Activated CD8-positive, alpha-beta memory T cell treated with anti-CD3 and anti-CD28 coated beads, Interleukin-2, amount 10 ng/mL, durations not matched to agents 7 days and 5 days (primary cell): ENCODE measurements at regions of chr15 and their contacts with region 1.

Region 1: GRCh38 chr15:59725172-59725486 is 36.0 kb upstream of the BNIP2 start:
- DNase-seq: no peak
- ATAC-seq: no peak
- H3K4me3 Mint-ChIP-seq: no peak overlapping the region
- H3K27ac Mint-ChIP-seq: no peak overlapping the region
- H3K4me1 Mint-ChIP-seq: peaks cover 2% of the 10 kb centered on the region
- H3K27me3 Mint-ChIP-seq: peaks cover 23% of the 10 kb centered on the region

Region 2: DNA sequence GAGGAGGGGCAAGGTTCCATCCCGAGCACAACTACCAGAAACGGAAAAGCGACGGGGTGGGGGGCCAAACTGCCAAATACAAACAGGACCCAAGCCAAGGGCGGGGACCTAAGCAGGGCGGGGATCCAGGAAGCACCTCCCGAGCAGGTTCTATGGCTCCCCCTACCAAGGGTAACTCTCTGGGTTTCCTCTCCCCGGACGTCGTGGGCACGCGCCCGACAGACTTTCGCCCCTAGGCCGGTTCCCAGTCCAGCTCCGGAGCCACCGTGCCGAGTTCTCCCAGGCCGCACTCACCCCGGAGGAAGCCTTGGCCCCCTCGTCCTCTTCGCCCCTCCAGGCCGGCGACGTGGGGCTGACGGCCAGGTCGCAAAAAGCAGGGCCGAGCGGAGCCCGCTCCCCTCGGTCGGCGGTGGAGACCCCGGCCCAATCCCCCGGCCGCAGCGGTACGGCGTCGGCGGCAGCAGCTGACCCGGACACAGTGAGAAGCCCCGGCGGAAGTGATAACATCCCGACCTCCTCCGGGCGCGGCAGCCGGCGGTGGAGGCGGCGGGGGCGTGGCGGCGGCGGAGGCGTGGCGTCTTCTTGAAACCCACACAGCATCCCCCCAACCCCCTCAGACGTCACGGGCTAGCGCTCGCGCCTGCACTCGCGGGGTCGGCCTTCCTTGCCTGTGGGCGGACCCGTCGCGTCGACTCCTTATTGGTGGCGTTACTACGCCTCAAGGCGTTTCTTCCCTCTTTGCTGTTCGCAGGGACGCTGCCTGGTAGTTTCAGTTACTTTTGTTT is 36.1 kb before region 1 on chr15 and contains the start of gene BNIP2:
- CTCF ChIA-PET with region 1: interaction called, 14 read pairs
- DNase-seq: peak; percentile 100
- ATAC-seq: peak; percentile 93
- H3K4me3 Mint-ChIP-seq: peak within 1 kb of the TSS; percentile 84
- H3K27ac Mint-ChIP-seq: peak within 1 kb of the TSS; percentile 97
- H3K4me1 Mint-ChIP-seq: peaks cover 42% of the 10 kb centered on the region
- H3K27me3 Mint-ChIP-seq: no peaks in the 10 kb centered on the region
- total RNA-seq, gene BNIP2: 59.3 to 75.2 TPM

Region 3: GRCh38 chr15:59879506-59880265 is 154.6 kb after region 1 on chr15:
- CTCF ChIA-PET with region 1: no interaction called
- DNase-seq: no peak
- ATAC-seq: no peak
- H3K4me3 Mint-ChIP-seq: no peak overlapping the region
- H3K27ac Mint-ChIP-seq: no peak overlapping the region
- H3K4me1 Mint-ChIP-seq: no peaks in the 10 kb centered on the region
- H3K27me3 Mint-ChIP-seq: peaks cover 18% of the 10 kb centered on the region

Region 4: DNA sequence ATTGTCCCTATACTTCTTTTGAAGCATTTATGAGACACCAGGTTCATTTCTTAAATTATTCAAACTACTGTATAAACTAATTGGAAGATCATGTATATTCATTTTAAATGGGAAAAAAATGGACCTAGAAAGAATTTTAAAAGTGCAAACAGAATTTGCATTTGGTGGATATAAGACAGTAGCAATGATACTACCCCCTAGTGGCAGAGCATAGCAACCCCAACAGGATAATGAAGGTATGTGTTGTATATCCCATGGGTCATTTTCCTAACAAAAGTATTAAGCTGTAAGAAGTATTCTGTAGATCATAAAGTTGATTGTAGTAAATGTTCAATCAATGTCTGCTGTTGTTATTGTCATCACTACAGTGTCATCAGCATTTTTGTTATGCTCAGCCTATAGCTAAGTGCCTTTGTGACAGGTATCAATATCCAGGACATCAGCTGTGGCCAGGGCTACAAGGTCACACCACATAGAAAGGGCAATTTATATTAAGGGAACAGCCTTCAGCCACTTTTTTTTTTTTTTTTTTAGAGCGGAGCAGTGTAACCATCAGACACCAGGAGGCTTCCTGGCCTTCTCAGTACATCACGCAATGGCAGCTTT is 454.8 kb after region 1 on chr15:
- CTCF ChIA-PET with region 1: interaction called, 11 read pairs
- DNase-seq: peak; percentile 51
- ATAC-seq: peak; percentile 57
- H3K4me3 Mint-ChIP-seq: no peak overlapping the region
- H3K27ac Mint-ChIP-seq: no peak overlapping the region
- H3K4me1 Mint-ChIP-seq: no peaks in the 10 kb centered on the region
- H3K27me3 Mint-ChIP-seq: peaks cover 49% of the 10 kb centered on the region